Activated CD4-positive, alpha-beta T cell treated with anti-CD3 and anti-CD28 coated beads, Interleukin-2, amount 10 ng/mL, durations not matched to agents 24 days and 14 days (primary cell): ENCODE measurements at regions of chr10 and their contacts with region 1.

Region 1: DNA sequence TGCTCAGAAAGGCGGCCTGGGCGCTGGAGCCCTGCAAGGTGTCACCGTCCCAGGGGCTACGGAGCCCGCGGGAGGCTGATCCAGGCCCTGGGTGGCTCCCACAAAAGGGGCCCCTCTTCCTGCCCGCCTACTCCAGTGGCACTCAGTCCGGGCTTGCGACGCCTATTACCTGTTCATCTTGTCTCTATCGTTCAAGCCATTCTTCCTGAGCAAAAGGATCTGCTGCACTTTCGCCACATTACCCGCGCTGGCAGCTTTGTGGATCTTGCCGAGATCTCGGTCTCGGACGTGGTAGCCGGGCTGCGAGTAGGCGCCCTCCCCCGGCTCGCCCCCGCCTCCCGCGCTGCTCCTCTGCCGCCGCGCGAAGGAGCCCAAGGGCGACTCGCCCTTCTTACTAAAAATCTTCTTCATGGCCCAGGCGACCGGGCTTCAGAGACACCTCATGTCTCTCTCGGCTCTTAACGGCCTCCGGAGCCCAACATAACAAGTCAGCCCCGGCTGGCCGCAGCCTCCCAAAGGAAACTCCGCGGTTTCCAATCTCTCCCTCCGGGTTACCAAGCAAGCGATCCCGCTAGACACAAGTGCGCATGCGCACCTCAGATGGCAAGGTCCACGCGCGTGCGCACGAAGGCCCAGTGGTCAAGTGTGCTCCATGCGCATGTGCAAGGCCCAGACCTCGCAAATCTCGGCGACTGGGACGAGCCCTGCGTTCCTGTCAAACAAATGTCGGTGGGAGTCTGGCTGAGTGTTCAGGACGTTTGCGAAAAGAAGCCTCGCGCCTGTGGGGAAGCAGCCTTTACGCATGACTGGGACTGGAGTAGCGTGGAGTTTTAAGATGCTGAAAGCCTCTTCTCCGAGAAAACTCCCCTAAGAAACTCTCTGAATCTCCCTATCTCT is at the start of gene ANKRD26:
- DNase-seq: peak; percentile 99
- H3K4me3 Mint-ChIP-seq: peak within 1 kb of the TSS; percentile 85
- H3K27ac Mint-ChIP-seq: peak within 1 kb of the TSS; percentile 94
- H3K4me1 Mint-ChIP-seq: peaks cover 41% of the 10 kb centered on the region
- H3K27me3 Mint-ChIP-seq: peaks cover 2% of the 10 kb centered on the region
- total RNA-seq, gene ANKRD26: 5.3 and 5.8 TPM in 2 replicates

Region 2: DNA sequence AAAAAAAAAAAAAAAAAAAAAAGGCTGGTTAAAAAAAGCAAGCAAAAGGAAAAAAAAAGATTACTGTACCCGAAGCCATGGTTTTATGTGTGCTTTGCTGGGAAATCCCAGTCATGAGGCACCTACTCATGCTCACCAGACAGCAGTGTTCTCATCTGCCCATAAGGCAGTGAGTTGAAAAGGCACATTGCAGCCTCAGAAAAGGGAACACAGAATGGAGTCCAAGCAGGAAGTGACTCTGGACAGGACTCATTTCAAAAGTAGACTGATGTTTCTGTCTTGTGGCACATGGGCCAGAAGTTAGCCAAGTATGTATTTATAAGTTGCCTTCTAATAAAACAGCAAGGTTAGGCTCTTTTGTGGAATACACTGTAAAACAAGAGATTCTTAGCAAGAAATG is 362.4 kb before region 1 on chr10:
- intact Hi-C with region 1: loop called (anchors 5 kb)
- DNase-seq: peak; percentile 83
- H3K4me3 Mint-ChIP-seq: peak overlapping the region; percentile 47
- H3K27ac Mint-ChIP-seq: peak overlapping the region; percentile 98
- H3K4me1 Mint-ChIP-seq: peaks cover 42% of the 10 kb centered on the region
- H3K27me3 Mint-ChIP-seq: no peaks in the 10 kb centered on the region

Region 3: DNA sequence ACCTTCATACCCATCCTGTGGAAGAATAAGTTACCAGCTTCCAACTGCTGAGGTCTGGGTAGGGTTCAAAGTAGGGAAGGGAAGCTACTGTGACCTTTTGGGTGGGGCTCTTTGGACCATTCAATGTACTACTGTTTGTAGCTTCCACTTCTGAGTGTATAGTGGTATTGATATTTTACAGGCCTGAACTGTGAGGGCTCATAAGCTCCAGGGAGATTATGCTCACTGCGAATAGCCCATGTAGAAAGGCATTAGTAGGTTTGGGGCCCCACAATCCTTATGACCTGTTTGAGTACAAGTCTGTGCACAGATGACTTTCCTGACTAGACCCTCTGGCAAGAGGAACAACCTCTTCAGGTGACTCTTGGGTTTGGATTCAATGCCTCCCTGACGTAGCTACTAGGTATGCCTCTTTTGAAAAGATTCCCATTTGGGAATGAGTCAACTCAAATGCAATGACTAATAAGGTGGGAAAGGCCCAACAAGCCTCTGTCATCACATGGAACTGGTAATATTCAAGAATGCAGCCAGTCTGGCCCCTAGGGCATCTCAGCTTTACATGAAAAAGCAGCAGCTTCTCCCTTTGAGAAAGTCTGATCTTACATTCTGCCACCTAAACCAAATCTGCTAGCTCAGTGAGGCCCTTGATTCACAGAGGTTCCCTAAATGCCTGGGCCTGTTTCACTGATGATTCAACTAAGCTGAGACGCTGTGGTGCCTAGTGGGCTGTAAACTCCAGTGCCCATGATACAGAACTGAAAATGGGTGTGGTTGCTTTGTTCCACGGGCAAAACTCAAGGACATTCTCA is 319.2 kb before region 1 on chr10:
- intact Hi-C with region 1: no loop called
- DNase-seq: no peak
- H3K4me3 Mint-ChIP-seq: no peak overlapping the region
- H3K27ac Mint-ChIP-seq: peak overlapping the region; percentile 54
- H3K4me1 Mint-ChIP-seq: peaks cover 41% of the 10 kb centered on the region
- H3K27me3 Mint-ChIP-seq: no peaks in the 10 kb centered on the region

Region 4: DNA sequence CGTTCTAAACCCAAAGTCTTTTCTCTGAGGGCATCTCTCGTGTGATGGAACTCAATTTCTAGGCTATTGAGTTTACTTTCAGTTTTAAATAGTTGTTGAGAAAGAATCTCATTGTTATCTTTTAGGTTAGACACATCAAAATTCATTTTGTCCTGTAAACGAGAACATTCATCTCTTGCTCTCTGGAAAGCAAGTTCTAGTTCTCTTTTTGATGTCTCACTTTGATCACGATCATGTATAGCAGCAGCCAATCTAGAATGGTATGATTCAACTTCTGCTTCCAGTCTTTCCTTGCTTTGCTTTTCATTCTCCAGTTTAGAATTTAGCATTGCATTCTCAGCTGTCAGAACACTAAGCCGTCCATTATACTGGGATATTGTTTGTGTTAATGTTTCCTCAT is 65.0 kb before region 1 on chr10:
- intact Hi-C with region 1: loop called (anchors 1 kb)
- DNase-seq: no peak
- H3K4me3 Mint-ChIP-seq: peak overlapping the region; percentile 66
- H3K27ac Mint-ChIP-seq: peak overlapping the region; percentile 60
- H3K4me1 Mint-ChIP-seq: peaks cover 17% of the 10 kb centered on the region
- H3K27me3 Mint-ChIP-seq: no peaks in the 10 kb centered on the region